ENCODE measurements at regions of chr1 and their contacts with region 1.

Region 1: GRCh38 chr1:51519048-51519864 is at the start of gene EPS15:
- DNase-seq: peak; percentile 75 to 90 (median 79)
- H3K4me3 ChIP-seq: peak within 1 kb of the TSS; percentile 89
- H3K4me3 Mint-ChIP-seq: peak within 1 kb of the TSS; percentile 92 to 98 (median 96)
- H3K27ac ChIP-seq: peak within 1 kb of the TSS; percentile 87
- H3K27ac Mint-ChIP-seq: peak within 1 kb of the TSS; percentile 94 to 98 (median 97)
- H3K4me1 ChIP-seq: peaks cover 37% of the 10 kb centered on the region
- H3K4me1 Mint-ChIP-seq: peaks cover 58 to 61% (median 60%) of the 10 kb centered on the region in 3 donors
- H3K27me3 ChIP-seq: no peaks in the 10 kb centered on the region
- H3K27me3 Mint-ChIP-seq: no peaks in the 10 kb centered on the region
- total RNA-seq, gene EPS15: 108 to 112 TPM

Region 2: DNA sequence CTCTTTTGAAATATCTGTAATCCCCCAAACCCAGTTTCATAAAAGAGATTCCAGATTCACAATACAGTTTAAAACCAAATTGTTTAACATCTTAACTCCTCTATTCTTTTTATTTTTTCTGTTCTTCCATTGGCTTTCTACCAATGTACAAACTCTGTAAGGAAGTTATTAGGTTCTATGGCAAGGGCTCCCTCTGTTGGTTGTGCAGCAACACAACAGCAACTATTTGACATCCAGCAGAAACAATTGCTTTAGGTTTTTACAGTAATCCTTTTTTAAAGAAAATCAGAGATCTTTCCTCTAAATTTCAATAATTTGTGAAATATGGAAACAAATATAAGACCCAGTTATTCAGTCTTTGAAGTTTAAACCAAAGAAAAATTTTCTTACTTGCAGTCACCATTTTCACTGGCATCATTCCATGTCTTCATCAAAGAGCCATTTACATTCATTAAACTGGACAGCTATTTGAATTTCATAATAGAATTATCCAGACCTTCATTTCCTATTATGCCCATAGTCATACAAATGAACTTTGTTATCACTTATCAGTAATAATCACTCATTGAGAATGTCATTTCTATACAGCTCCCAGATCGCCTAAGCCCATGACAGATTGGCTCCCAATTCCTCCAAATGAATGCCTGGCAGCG is 329.7 kb before region 1 on chr1:
- CTCF ChIA-PET with region 1: no interaction called
- POLR2A ChIA-PET with region 1: no interaction called
- DNase-seq: peak; percentile 5 to 48 (median 36)
- H3K4me3 ChIP-seq: no peak overlapping the region
- H3K4me3 Mint-ChIP-seq: no peak overlapping the region
- H3K27ac ChIP-seq: no peak overlapping the region
- H3K27ac Mint-ChIP-seq: no peak overlapping the region
- H3K4me1 ChIP-seq: no peaks in the 10 kb centered on the region
- H3K4me1 Mint-ChIP-seq: no peaks in the 10 kb centered on the region
- H3K27me3 ChIP-seq: no peaks in the 10 kb centered on the region
- H3K27me3 Mint-ChIP-seq: peaks cover 0 to 1% of the 10 kb centered on the region in 2 donors

Region 3: GRCh38 chr1:51506537-51506936 is 12.7 kb before region 1 on chr1:
- CTCF ChIA-PET with region 1: interaction called, 6 read pairs
- POLR2A ChIA-PET with region 1: interaction called, 10 read pairs
- DNase-seq: no peak
- H3K4me3 ChIP-seq: no peak overlapping the region
- H3K4me3 Mint-ChIP-seq: peak overlapping the region in 5 of 7 donors; percentile 7 to 75 (median 45)
- H3K27ac ChIP-seq: no peak overlapping the region
- H3K27ac Mint-ChIP-seq: peak overlapping the region in 3 of 8 donors; percentile 24 to 36 (median 30)
- H3K4me1 ChIP-seq: peaks cover 25% of the 10 kb centered on the region
- H3K4me1 Mint-ChIP-seq: peaks cover 68 to 84% (median 83%) of the 10 kb centered on the region in 3 donors
- H3K27me3 ChIP-seq: no peaks in the 10 kb centered on the region
- H3K27me3 Mint-ChIP-seq: no peaks in the 10 kb centered on the region

Region 4: DNA sequence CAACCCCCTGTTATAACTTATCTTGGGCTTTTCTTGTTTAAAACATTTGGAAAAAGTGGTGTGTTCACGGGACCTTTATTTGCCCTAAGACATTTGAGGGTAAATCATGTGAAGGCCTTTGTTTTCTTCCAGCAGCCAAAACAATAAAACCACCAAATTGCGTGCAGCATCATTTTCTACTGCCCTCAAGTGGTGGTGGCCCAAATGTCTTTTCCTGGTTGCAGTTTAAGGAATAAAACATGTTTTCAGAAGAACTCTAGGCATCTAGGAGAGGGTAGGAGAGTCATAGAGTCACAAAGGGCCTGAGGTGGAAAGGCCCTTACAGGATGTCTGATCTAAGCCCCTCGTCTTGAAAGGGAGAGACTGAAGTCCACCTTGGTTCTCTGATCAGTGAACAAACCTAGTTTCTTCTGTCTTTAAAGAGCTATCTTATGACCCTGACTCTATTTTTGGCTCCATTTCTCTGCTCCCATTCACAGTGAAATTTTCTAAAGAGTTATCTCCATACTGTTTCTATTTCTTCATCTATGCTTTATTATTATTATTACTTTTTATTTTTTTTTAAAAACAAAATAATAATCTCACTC is 15.8 kb after region 1 on chr1:
- CTCF ChIA-PET with region 1: interaction called, 14 read pairs
- POLR2A ChIA-PET with region 1: no interaction called
- DNase-seq: peak; percentile 12 to 67 (median 15)
- H3K4me3 ChIP-seq: no peak overlapping the region
- H3K4me3 Mint-ChIP-seq: peak overlapping the region in 1 of 7 donors; percentile 52
- H3K27ac ChIP-seq: no peak overlapping the region
- H3K27ac Mint-ChIP-seq: peak overlapping the region in 7 of 8 donors; percentile 34 to 87 (median 73)
- H3K4me1 ChIP-seq: no peaks in the 10 kb centered on the region
- H3K4me1 Mint-ChIP-seq: peaks cover 8 to 14% (median 10%) of the 10 kb centered on the region in 3 donors
- H3K27me3 ChIP-seq: no peaks in the 10 kb centered on the region
- H3K27me3 Mint-ChIP-seq: no peaks in the 10 kb centered on the region

Region 5: DNA sequence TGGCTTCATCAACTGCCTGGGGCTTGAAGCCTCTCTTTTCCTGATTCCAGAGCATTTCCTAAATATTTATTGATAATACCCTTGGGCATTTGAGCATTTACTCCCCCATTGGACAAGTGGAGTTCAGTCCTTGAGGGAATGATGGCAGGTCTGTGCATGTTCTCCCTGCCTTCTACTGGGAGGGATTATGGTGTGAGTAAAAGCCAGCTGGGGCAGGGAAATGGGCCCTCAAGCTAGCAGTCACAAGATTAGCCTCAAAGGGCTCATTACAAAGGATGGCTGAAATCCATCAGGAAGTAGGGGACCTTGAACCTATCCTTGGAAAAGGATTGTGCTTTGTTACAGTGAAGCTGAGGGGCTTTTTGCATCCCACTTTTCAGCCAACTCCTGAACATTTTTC is 73.5 kb after region 1 on chr1:
- CTCF ChIA-PET with region 1: no interaction called
- POLR2A ChIA-PET with region 1: no interaction called
- DNase-seq: no peak
- H3K4me3 ChIP-seq: no peak overlapping the region
- H3K4me3 Mint-ChIP-seq: no peak overlapping the region
- H3K27ac ChIP-seq: no peak overlapping the region
- H3K27ac Mint-ChIP-seq: no peak overlapping the region
- H3K4me1 ChIP-seq: no peaks in the 10 kb centered on the region
- H3K4me1 Mint-ChIP-seq: no peaks in the 10 kb centered on the region
- H3K27me3 ChIP-seq: no peaks in the 10 kb centered on the region
- H3K27me3 Mint-ChIP-seq: peaks cover 6 to 7% of the 10 kb centered on the region in 2 donors